ENCODE measurements at regions of chr2 and their contacts with region 1.

Region 1: GRCh38 chr2:238784671-238785527 is 63.0 kb upstream of the TWIST2 start:
- DNase-seq: peak; percentile 73 to 82
- ATAC-seq: peak; percentile 84 to 96 (median 87)
- H3K4me3 ChIP-seq: no peak overlapping the region
- H3K27ac ChIP-seq: no peak overlapping the region
- H3K4me1 ChIP-seq: no peaks in the 10 kb centered on the region
- H3K27me3 ChIP-seq: no peaks in the 10 kb centered on the region
- CTCF ChIP-seq: peak; percentile 83

Region 2: DNA sequence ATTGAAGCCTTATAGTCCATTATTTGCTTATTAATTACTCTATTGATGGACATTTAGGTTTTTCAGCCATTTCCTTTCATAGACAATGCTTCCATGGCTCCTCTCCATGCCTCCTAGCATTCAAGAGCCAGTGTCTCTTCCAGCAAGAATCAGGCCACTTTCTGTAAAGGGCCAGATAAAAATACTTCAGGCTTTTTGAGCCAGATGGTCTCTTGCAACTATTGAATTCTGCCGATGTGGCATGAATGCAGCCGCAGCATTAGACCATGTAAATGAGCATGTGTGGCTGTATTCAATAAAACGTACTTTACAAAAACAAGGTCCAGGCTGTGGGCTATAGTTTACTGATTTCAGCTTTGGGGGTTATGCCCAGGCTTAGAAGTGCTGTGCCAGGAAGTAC is 426.1 kb before region 1 on chr2:
- intact Hi-C with region 1: loop called (anchors 5 kb)
- DNase-seq: no peak
- ATAC-seq: no peak
- H3K4me3 ChIP-seq: no peak overlapping the region
- H3K27ac ChIP-seq: no peak overlapping the region
- H3K4me1 ChIP-seq: peaks cover 4% of the 10 kb centered on the region
- H3K27me3 ChIP-seq: no peaks in the 10 kb centered on the region
- CTCF ChIP-seq: no peak

Region 3: DNA sequence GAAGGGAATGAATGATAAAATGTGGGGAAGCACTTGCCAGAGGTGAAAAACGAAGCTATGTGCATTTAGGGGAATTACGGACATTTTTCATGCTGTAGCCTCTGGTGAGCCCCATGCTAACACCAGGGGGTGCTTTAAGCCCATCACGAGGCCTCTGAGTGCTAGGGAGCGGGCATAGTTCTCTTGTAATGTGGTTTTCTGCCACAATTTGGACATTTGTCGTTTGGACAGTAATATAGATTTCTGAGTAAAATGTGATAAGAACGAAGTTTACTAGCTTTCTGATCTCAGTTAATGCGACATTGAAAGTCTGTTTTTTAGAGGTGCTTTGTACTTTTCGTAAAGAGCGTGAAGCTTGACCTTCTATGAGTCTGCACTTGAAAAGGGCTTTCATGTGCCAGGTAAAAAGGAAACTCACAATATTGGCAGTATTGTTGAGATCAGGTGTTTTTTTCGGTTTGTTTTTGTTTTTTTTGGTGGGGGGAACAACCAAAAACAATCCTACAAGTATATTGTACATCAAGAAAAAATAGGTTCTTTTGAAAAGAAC is 414.0 kb before region 1 on chr2:
- intact Hi-C with region 1: loop called (anchors 2 to 5 kb)
- DNase-seq: peak; percentile 39 to 75
- ATAC-seq: peak; percentile 73 to 95 (median 88)
- H3K4me3 ChIP-seq: no peak overlapping the region
- H3K27ac ChIP-seq: no peak overlapping the region
- H3K4me1 ChIP-seq: no peaks in the 10 kb centered on the region
- H3K27me3 ChIP-seq: no peaks in the 10 kb centered on the region
- CTCF ChIP-seq: peak; percentile 73

Region 4: GRCh38 chr2:238518172-238518820 is 266.6 kb before region 1 on chr2:
- intact Hi-C with region 1: loop called in 1 of 2 experiments (anchors 5 kb)
- DNase-seq: no peak
- ATAC-seq: no peak
- H3K4me3 ChIP-seq: no peak overlapping the region
- H3K27ac ChIP-seq: no peak overlapping the region
- H3K4me1 ChIP-seq: no peaks in the 10 kb centered on the region
- H3K27me3 ChIP-seq: no peaks in the 10 kb centered on the region
- CTCF ChIP-seq: no peak

Region 5: DNA sequence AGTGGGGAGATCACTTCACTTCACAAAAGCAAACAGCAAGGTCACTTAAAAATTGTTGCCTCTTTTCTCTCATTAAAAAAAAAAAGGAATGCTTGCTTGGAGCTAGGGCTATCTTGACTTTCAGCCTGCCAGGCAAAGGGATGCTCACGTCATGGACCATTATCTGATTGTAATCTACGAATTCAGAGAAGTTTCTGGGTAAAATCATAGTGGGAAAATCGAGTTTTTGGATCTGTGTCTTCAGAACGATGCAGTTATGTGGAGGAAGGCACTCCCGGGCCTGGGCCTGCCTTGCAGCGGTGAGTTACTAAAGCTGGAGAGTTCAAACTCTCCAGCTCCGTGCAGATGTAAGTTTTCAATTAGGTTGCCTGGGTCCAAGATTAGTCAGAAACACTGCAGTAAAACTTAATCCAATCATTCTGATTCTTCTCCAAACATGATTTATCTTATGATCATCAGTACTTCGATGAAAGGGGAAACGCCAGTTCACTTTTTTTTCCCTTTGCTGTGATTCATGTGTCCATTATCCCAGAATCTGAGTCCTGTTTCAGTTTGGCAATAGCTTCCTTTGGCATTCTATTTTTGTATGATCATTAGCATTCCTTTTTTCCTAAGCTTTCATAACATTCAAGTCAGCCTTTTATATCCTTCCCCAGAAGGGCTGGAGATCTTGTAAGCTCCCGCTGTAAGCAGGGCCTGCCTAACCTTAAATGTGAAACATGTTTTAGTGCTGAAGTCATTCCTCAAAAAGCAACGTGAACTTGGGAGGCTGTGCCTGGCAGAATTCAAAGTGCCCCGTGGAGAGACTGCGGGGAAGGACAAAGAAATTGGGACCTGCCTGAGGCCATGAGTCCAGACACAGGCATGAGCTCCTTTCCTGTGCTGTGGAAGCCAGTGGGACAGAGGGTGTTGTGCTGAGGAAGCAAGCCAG is 56.3 kb before region 1 on chr2:
- intact Hi-C with region 1: no loop called
- DNase-seq: peak in 1 of 2 donors; percentile 44
- ATAC-seq: peak in 3 of 4 donors; percentile 36 to 52 (median 44)
- H3K4me3 ChIP-seq: no peak overlapping the region
- H3K27ac ChIP-seq: peak overlapping the region; percentile 46
- H3K4me1 ChIP-seq: no peaks in the 10 kb centered on the region
- H3K27me3 ChIP-seq: peaks cover 0 to 4% (median 2%) of the 10 kb centered on the region in 3 donors
- CTCF ChIP-seq: no peak

Measured in psoas muscle (tissue), 8 donors.